ENCODE measurements at regions of chr13 and their contacts with region 1.

Region 1: DNA sequence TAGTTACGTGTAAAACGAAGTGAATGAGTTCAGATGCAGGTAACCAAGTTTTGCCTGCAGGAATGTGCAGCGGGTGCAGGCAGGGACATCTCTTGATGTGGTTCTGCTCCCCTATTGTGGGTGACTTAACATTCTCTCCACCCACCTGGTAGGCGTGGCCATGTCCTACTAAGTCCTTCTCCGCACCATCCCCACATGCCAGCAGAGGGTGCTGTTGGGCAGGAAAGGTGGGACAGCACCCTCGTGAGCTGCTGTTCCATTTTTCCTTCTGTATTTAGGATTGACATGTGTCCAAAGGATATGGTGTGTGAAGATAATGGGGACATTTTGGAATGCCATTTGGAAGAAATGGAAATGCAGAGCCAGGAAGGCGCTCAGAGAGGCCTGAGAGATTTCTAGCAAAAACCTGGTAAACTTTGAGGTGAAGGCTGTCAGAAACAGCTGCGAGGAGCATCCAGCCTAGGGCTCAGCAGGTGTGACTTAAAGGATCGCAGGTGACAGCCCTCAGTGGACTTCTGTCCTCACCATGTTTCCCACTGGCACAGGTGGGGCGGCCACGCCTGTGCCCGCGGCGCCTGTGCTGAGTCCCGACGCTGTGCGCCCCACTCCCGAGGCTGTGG is 26.2 kb upstream of the MCF2L start:
- DNase-seq: peak; percentile 99
- ATAC-seq: peak; percentile 98
- H3K4me3 Mint-ChIP-seq: peak overlapping the region; percentile 82
- H3K27ac Mint-ChIP-seq: no peak overlapping the region
- H3K4me1 Mint-ChIP-seq: peaks cover 6% of the 10 kb centered on the region
- H3K27me3 Mint-ChIP-seq: peaks cover 20% of the 10 kb centered on the region
- CTCF ChIP-seq: peak; percentile 97

Region 2: DNA sequence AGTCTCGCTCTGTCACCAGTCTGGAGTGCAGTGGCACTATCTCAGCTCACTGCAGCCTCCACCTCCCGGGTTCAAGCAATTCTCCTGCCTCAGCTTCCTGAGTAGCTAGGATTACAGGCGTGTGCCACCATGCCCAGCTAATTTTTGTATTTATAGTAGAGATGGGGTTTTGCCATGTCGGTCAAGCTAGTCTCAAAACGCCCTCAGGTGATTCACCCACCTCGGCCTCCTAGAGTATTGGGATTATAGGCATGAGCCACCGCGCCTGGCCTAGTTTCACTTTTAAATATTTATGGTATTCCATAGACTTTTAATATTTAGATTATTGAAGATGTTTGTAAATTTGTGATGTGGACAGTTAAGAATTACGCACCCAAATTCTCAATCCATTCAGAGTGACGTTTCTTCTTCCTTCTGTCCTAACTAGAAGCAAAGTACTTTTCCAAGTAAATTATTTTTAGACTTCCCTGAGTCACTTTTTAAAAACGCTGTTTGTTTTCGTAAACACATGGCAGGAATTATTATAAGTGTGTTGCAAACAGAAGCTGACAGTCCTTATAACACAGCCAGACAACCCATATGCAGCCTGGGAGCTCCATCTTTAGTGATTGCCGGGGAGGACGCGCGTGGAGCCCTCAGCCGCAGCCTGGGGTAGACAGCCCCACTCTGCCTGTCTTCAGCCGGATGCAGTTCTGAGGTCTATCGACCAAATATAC is 121.3 kb before region 1 on chr13:
- CTCF ChIA-PET with region 1: no interaction called
- POLR2A ChIA-PET with region 1: no interaction called
- intact Hi-C with region 1: no loop called
- DNase-seq: no peak
- ATAC-seq: no peak
- H3K4me3 Mint-ChIP-seq: no peak overlapping the region
- H3K27ac Mint-ChIP-seq: no peak overlapping the region
- H3K4me1 Mint-ChIP-seq: no peaks in the 10 kb centered on the region
- H3K27me3 Mint-ChIP-seq: no peaks in the 10 kb centered on the region
- CTCF ChIP-seq: no peak

Region 3: GRCh38 chr13:112968908-112969691 is 26.3 kb after region 1 on chr13 and contains the start of gene MCF2L:
- CTCF ChIA-PET with region 1: interaction called, 16 read pairs
- POLR2A ChIA-PET with region 1: no interaction called
- intact Hi-C with region 1: no loop called
- DNase-seq: peak; percentile 78
- ATAC-seq: peak; percentile 88
- H3K4me3 Mint-ChIP-seq: peak within 1 kb of the TSS; percentile 82
- H3K27ac Mint-ChIP-seq: peak within 1 kb of the TSS; percentile 92
- H3K4me1 Mint-ChIP-seq: peaks cover 23% of the 10 kb centered on the region
- H3K27me3 Mint-ChIP-seq: no peaks in the 10 kb centered on the region
- CTCF ChIP-seq: no peak
- total RNA-seq, gene MCF2L: 7.6 to 8.9 TPM

Region 4: DNA sequence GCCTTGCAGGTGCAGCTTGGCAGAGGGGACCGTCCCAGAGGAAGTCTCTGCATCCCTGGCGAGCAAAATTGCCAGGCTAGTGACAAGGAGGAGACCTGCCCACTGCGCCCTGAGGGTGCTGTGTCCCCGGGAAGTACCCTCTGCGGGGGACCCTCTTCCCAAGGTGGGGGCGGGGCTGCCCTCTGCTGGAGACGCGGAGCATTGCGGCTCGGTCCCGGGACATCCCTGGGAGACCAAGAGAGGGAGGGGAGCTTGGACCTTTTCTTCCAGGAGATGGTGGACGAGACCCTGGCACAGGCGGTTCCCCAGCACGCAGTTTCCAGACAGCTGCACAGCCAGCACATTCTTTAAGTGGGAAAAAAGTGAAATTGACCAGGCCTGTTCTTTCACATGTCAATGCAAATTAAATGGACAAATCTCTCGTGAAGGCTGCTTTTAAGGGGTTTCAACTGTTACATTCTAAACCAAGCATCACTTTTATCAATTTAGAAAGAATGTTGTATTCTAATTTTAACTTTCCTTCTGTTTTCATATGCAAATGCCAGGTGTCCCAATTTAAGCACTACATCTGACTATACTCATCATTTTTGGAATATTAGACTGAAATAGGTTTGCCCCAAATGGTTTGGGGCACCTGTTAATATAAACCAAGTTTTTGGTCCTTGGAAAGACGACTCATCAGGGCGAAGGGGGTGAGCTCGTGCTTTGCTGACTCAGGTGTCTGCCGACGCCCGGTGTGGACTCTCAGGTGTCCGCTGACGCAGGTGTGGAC is 86.9 kb after region 1 on chr13:
- CTCF ChIA-PET with region 1: interaction called, 27 read pairs
- POLR2A ChIA-PET with region 1: no interaction called
- intact Hi-C with region 1: loop called (anchors 2 kb)
- DNase-seq: peak; percentile 73
- ATAC-seq: peak; percentile 89
- H3K4me3 Mint-ChIP-seq: no peak overlapping the region
- H3K27ac Mint-ChIP-seq: no peak overlapping the region
- H3K4me1 Mint-ChIP-seq: no peaks in the 10 kb centered on the region
- H3K27me3 Mint-ChIP-seq: no peaks in the 10 kb centered on the region
- CTCF ChIP-seq: peak; percentile 96

Region 5: DNA sequence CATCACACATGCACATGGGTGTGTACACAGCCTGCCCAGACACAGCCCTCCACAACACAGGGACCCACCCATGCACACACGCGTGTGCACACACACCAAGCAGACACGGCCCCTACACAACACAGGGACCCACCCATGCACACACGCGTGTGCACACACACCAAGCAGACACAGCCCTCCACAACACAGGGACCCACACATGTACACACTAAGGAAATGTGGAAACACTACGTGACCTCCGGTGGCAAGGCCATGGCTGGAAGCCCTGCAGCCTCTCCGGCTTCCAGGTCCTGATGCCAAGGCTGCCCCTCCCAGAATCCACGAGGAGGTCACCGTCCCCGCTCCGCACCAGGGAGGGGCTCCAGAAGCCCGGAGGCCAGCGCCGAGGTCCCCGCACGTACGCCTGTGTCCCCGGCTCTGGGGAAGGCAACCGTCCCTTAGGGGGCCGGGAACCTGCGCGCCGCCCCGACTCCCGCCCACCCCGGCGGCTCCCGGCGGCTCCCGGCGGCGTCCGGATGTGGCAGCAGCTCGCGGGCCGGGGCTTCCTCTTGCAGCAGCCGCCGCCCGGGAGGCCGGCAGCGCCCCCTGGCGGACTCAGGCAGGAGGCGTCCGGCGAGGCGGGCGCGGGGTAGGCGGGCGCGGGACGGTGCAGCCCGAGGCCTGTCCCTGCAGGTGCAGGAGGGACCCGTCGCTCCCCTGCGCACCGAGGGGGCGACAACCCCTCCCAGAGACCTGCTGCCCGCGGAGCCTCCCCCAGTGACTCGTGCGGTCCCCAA is 451.0 kb after region 1 on chr13:
- CTCF ChIA-PET with region 1: interaction called, 5 read pairs
- POLR2A ChIA-PET with region 1: no interaction called
- intact Hi-C with region 1: loop called (anchors 5 kb)
- DNase-seq: peak; percentile 89
- ATAC-seq: peak; percentile 94
- H3K4me3 Mint-ChIP-seq: peak overlapping the region; percentile 89
- H3K27ac Mint-ChIP-seq: peak overlapping the region; percentile 70
- H3K4me1 Mint-ChIP-seq: peaks cover 4% of the 10 kb centered on the region
- H3K27me3 Mint-ChIP-seq: no peaks in the 10 kb centered on the region
- CTCF ChIP-seq: peak; percentile 85

Measured in activated CD8-positive, alpha-beta T cell treated with anti-CD3 and anti-CD28 coated beads for 36 hours (primary cell).